Psoas muscle (tissue), 8 donors: ENCODE measurements at regions of chr1 and their contacts with region 1.

Region 1: GRCh38 chr1:68770817-68771216 is 273.9 kb upstream of the DEPDC1 start:
- DNase-seq: no peak
- ATAC-seq: no peak
- H3K4me3 ChIP-seq: no peak overlapping the region
- H3K27ac ChIP-seq: no peak overlapping the region
- H3K4me1 ChIP-seq: no peaks in the 10 kb centered on the region
- H3K27me3 ChIP-seq: no peaks in the 10 kb centered on the region
- CTCF ChIP-seq: no peak

Region 2: DNA sequence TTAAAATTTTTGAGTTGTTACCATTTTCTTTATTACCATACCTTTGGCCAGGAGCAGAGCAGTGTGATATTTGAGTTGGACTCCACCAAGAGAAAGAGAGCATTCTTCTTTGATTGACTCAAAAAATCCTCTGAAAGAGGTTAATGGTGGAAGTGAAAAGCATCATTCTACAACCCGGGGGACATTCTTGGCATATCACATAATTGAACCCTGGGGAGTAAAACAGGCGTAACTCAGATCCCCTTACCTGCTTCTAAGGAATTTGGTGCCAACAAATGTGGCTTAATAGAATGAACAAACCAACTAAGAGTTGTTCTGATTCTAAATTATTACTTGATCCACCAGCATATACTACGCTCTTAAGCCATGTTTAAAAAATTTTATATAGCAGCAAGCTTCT is 77.2 kb after region 1 on chr1:
- intact Hi-C with region 1: loop called in 1 of 2 experiments (anchors 5 kb)
- DNase-seq: no peak
- ATAC-seq: no peak
- H3K4me3 ChIP-seq: no peak overlapping the region
- H3K27ac ChIP-seq: no peak overlapping the region
- H3K4me1 ChIP-seq: no peaks in the 10 kb centered on the region
- H3K27me3 ChIP-seq: no peaks in the 10 kb centered on the region
- CTCF ChIP-seq: no peak